Left ventricle myocardium superior (tissue), 1 donor: ENCODE measurements at regions of chr3 and their contacts with region 1.

Region 1: DNA sequence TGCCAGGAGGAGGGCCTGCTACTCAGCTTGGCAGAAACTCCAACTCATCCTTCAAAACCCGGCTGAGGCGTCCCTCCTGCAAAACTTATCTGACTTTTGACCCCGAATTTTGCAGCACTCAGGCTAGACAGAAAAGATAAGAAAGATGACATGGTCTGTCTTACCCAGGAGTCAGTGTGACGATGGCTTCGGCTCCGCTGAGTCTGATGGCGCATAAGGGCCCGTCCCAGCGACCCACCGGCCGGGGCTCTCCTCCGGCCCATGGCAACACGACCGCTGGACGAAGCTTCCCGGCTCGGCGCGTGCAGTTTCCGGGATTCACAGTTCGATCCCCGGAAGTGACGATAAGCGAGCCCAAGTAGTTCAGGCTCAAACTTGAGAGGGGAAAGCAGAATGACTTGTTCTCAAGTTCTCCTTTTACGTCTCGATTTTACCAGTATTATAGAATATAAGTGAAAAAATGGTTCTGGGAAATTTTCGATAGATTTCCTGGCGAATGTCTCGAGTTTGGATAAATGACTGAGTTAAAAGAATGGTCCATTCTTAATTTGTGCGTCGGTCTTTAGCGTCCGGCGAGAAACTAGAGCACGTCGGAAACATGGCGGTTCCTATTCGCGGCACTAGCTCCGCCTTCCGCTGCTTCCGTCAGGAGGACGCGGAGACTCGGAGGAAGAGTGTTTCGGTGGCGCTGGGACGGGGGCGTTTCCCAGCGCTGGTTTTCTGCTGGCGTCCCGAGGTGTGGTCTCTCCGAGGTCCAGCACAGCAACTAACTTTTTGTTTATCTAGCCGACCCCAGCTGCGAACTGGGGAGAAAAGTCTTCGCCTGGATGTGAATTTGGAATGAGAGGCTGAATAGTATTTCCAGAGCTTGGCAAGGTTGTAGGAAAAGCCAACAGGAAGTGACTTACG is at the start of gene LSG1:
- DNase-seq: peak; percentile 94
- ATAC-seq: peak; percentile 97
- total RNA-seq, gene LSG1: 21.4 TPM

Region 2: GRCh38 chr3:195517030-195517429 is 844.9 kb after region 1 on chr3:
- intact Hi-C with region 1: loop called (anchors 5 kb)
- DNase-seq: no peak
- ATAC-seq: no peak